Activated CD4-positive, alpha-beta T cell treated with anti-CD3 and anti-CD28 coated beads, Interleukin-2, amount 10 ng/mL, durations not matched to agents 24 days and 14 days (primary cell): ENCODE measurements at regions of chr3 and their contacts with region 1.

Region 1: GRCh38 chr3:148389916-148390315 is 307.8 kb upstream of the AGTR1 start:
- DNase-seq: no peak
- H3K4me3 Mint-ChIP-seq: no peak overlapping the region
- H3K27ac Mint-ChIP-seq: no peak overlapping the region
- H3K4me1 Mint-ChIP-seq: no peaks in the 10 kb centered on the region
- H3K27me3 Mint-ChIP-seq: no peaks in the 10 kb centered on the region

Region 2: DNA sequence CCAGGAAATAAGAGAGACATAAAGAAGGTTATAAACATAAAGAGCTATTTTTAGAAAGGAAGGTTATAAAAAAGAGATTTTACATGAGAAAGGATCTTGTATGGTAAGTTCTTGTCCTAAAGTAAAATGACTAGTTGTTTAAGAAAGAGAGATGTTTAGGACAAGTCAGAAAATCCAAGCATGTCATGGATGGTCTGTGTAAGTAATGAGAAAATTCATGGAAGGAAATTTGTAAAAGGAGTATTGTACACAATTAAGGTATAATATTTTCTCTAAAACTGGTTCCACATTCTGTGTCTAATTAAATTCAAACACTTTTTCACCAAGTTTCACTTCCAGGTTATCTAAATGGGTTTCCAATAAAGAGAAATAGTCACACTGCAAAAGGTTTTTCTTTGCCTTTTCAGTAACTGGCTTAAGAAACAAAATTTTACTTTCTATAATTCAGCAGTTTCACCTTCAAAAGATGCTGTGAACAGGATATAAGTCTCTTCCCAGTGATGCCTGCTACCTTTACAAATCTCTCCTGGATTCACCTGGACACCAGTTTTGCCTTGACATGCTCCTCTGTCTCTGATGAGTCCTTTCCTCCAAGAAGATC is 525.1 kb before region 1 on chr3:
- intact Hi-C with region 1: loop called (anchors 10 kb)
- DNase-seq: no peak
- H3K4me3 Mint-ChIP-seq: no peak overlapping the region
- H3K27ac Mint-ChIP-seq: no peak overlapping the region
- H3K4me1 Mint-ChIP-seq: no peaks in the 10 kb centered on the region
- H3K27me3 Mint-ChIP-seq: no peaks in the 10 kb centered on the region